ENCODE measurements at regions of chr15 and their contacts with region 1.

Region 1: GRCh38 chr15:101288908-101289513 is 6.0 kb downstream of the SNRPA1 start:
- DNase-seq: no peak
- CTCF ChIP-seq: peak; percentile 60

Region 2: GRCh38 chr15:100981086-100981485 is 307.9 kb before region 1 on chr15:
- CTCF ChIA-PET with region 1: no interaction called
- POLR2A ChIA-PET with region 1: no interaction called
- DNase-seq: no peak
- CTCF ChIP-seq: no peak

Region 3: GRCh38 chr15:101264011-101264410 is 25.0 kb before region 1 on chr15:
- CTCF ChIA-PET with region 1: interaction called, 12 read pairs
- POLR2A ChIA-PET with region 1: no interaction called
- DNase-seq: peak; percentile 53
- CTCF ChIP-seq: no peak

Region 4: GRCh38 chr15:101277038-101277882 is 11.8 kb before region 1 on chr15 and contains the start of gene SELENOS:
- CTCF ChIA-PET with region 1: interaction called, 34 read pairs
- POLR2A ChIA-PET with region 1: no interaction called
- DNase-seq: peak; percentile 94
- CTCF ChIP-seq: no peak

Region 5: GRCh38 chr15:101307048-101307896 is 18.3 kb after region 1 on chr15:
- CTCF ChIA-PET with region 1: interaction called, 17 read pairs
- POLR2A ChIA-PET with region 1: no interaction called
- DNase-seq: no peak
- CTCF ChIP-seq: no peak

Region 6: DNA sequence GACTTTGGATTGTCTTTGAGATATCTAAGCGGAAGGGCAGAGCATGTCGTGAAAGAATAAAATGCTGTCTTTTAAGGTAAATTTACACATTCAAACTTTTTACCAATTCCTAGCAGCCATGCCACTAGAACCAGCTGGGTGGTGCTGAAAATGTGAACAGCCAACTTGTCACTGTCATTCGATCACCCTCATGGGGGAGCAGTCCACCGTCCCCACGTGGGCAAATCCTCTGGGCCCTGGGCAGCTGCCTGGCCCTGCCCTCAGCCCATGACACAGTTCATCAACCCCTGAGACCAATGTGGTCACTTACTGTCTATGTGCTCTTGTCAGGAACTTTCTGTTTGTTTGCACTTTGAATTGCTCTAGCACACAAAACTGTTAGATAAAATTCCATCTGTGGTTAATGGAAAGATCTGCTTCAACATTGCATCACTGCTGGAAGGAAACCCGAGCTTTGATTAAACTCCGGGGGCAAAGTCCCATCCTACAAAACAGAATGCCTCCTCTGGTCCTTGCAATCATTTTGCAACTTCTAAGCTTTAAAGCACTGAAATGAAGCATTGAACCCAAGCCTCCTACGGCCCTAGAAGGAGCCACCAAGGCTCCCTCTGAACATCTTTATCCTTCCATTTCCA is 150.4 kb after region 1 on chr15:
- CTCF ChIA-PET with region 1: no interaction called
- POLR2A ChIA-PET with region 1: no interaction called
- DNase-seq: no peak
- CTCF ChIP-seq: no peak

Measured in GM10248 (cell line).